PC-9 (cell line): ENCODE measurements at regions of chr3 and their contacts with region 1.

Region 1: DNA sequence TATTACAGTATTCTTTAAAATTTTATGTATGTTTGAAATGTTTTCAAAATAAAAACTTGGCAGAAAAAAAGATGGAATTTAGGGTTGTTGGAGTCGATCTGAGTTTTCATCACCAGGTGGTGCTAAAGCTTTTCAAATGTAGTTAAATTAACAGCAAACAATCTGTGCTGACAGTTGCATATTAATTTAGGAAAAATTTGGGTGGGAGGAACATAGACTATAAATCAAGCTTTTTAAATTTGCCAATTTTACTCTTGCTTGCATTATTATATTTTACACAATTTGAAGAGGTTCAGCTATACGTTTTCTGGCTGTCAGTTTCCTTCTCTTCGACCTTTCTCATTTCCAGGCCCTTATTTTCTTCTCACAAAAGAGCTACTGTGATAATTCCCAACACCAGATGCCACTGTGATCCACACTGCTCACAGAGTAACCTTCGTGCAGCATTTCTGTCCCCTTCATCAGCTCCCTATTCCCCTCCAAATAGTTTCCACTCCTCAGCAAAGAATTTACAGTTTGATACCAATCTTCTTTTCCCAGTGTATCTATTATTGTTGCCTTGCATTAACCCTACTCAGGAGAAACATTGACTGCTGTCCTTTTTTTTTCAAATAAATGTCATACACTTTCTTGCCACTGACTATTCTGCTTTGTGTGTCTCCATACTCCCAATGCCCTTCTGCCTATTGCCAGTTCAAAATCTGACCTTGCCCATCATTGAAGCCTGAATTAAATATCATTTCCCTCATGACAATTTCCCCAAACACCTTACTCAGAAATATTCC is 53.4 kb upstream of the EIF5A2 start:
- DNase-seq: peak; percentile 30 to 72
- H3K4me3 ChIP-seq: no peak overlapping the region; the same call in 1 of the 2 replicates
- H3K27ac ChIP-seq: peak overlapping the region; percentile 10
- H3K4me1 ChIP-seq: peaks cover 10% of the 10 kb centered on the region
- H3K27me3 ChIP-seq: no peaks in the 10 kb centered on the region
- CTCF ChIP-seq: peak; percentile 98

Region 2: DNA sequence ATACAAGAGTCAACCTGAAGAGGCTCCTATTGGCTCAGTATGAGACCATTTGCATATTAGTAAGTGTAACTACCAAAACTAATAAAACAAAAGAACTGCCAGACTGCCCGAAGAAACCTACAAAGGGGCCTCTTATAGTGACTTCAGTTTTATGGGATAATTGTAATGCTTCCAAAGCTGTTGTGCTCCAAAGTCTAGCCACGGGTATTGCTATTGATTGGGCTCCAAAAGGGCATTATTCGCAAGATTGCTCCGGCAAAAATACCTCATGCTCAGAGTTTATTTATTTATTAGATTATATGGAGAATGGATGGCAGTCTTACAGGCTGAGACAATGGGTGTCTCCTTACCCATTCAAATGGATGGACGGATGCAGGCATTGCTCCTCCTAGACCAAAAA is 103.2 kb before region 1 on chr3:
- CTCF ChIA-PET with region 1: no interaction called
- POLR2A ChIA-PET with region 1: no interaction called
- intact Hi-C with region 1: no loop called
- DNase-seq: no peak
- H3K4me3 ChIP-seq: no peak overlapping the region
- H3K27ac ChIP-seq: no peak overlapping the region
- H3K4me1 ChIP-seq: no peaks in the 10 kb centered on the region
- H3K27me3 ChIP-seq: no peaks in the 10 kb centered on the region
- CTCF ChIP-seq: no peak

Region 3: GRCh38 chr3:171157286-171157685 is 195.5 kb after region 1 on chr3:
- CTCF ChIA-PET with region 1: interaction called, 3 read pairs
- POLR2A ChIA-PET with region 1: no interaction called
- intact Hi-C with region 1: loop called (anchors 5 kb)
- DNase-seq: peak in 1 of 2 experiments; percentile 77
- H3K4me3 ChIP-seq: peak overlapping the region; percentile 17; the same call in 1 of the 2 replicates
- H3K27ac ChIP-seq: peak overlapping the region; percentile 93
- H3K4me1 ChIP-seq: peaks cover 53% of the 10 kb centered on the region
- H3K27me3 ChIP-seq: no peaks in the 10 kb centered on the region
- CTCF ChIP-seq: peak; percentile 43; the same call in 1 of the 2 replicates

Region 4: GRCh38 chr3:171459942-171460724 is 498.3 kb after region 1 on chr3 and contains the start of gene TNIK:
- CTCF ChIA-PET with region 1: no interaction called
- POLR2A ChIA-PET with region 1: no interaction called
- intact Hi-C with region 1: loop called (anchors 10 kb)
- DNase-seq: peak; percentile 87 to 94
- H3K4me3 ChIP-seq: peak within 1 kb of the TSS; percentile 69
- H3K27ac ChIP-seq: peak within 1 kb of the TSS; percentile 50
- H3K4me1 ChIP-seq: peaks cover 46% of the 10 kb centered on the region
- H3K27me3 ChIP-seq: no peaks in the 10 kb centered on the region
- CTCF ChIP-seq: peak; percentile 38; the same call in 1 of the 2 replicates
- total RNA-seq, gene TNIK: 28.8 and 30.7 TPM in 2 replicates

Region 5: DNA sequence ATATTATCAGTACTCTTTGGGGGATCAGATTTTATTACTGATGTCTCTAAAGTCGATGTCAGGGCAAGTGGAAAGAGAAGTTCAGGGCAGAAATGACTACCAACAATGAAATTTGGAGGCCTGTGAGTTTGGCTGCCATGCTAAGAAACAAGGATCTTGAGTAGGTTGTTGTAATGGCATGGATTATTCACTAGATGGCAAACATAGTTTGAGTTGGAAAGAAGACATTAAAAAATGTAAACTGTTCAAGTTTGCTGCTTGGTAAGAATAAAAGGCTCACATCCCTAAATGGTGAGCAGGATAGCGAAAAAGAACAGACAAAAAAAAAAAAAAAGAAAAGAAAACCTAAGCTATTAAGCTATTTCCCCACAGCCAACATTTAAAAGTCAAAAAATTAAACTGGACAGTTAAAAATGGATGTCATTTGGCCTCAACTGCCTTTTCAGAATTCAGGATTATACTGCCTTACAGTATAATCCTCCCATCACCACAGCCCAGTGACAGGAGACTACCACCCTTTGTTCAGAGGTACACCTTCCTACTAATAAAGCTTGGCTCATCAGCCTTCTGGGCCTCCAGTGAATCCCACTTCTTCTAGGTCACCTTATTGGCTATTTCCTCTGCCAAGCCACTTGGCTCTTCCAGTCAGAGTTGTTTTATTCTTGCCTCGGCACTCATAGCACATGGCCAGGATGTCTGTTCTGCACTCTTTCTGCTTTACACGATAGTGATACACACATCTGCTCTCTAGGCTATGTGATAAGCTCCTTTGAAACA is 684.7 kb after region 1 on chr3:
- CTCF ChIA-PET with region 1: interaction called, 4 read pairs
- POLR2A ChIA-PET with region 1: no interaction called
- intact Hi-C with region 1: loop called (anchors 5 kb)
- DNase-seq: peak in 1 of 2 experiments; percentile 51
- H3K4me3 ChIP-seq: no peak overlapping the region
- H3K27ac ChIP-seq: no peak overlapping the region
- H3K4me1 ChIP-seq: no peaks in the 10 kb centered on the region
- H3K27me3 ChIP-seq: no peaks in the 10 kb centered on the region
- CTCF ChIP-seq: peak; percentile 90

Region 6: GRCh38 chr3:172239218-172239790 is 1277.5 kb after region 1 on chr3:
- CTCF ChIA-PET with region 1: interaction called, 19 read pairs
- POLR2A ChIA-PET with region 1: no interaction called
- intact Hi-C with region 1: no loop called
- DNase-seq: no peak
- H3K4me3 ChIP-seq: no peak overlapping the region
- H3K27ac ChIP-seq: peak overlapping the region; percentile 13; the same call in 1 of the 2 replicates
- H3K4me1 ChIP-seq: peaks cover 13% of the 10 kb centered on the region
- H3K27me3 ChIP-seq: no peaks in the 10 kb centered on the region
- CTCF ChIP-seq: no peak

Region 7: GRCh38 chr3:172666873-172667694 is 1705.3 kb after region 1 on chr3:
- CTCF ChIA-PET with region 1: interaction called, 6 read pairs
- POLR2A ChIA-PET with region 1: no interaction called
- intact Hi-C with region 1: loop called (anchors 2 kb)
- DNase-seq: peak; percentile 79 to 82
- H3K4me3 ChIP-seq: no peak overlapping the region
- H3K27ac ChIP-seq: no peak overlapping the region
- H3K4me1 ChIP-seq: no peaks in the 10 kb centered on the region
- H3K27me3 ChIP-seq: no peaks in the 10 kb centered on the region
- CTCF ChIP-seq: peak; percentile 94